Endothelial cell of umbilical vein (primary cell): ENCODE measurements at regions of chr6 and their contacts with region 1.

Region 1: GRCh38 chr6:50935442-50935841 is 116.8 kb downstream of the TFAP2B start:
- DNase-seq: no peak
- H3K4me3 ChIP-seq: no peak overlapping the region
- H3K27ac ChIP-seq: no peak overlapping the region
- H3K4me1 ChIP-seq: no peaks in the 10 kb centered on the region
- H3K27me3 ChIP-seq: no peaks in the 10 kb centered on the region
- CTCF ChIP-seq: no peak
- POLR2A ChIP-seq: no peak

Region 2: DNA sequence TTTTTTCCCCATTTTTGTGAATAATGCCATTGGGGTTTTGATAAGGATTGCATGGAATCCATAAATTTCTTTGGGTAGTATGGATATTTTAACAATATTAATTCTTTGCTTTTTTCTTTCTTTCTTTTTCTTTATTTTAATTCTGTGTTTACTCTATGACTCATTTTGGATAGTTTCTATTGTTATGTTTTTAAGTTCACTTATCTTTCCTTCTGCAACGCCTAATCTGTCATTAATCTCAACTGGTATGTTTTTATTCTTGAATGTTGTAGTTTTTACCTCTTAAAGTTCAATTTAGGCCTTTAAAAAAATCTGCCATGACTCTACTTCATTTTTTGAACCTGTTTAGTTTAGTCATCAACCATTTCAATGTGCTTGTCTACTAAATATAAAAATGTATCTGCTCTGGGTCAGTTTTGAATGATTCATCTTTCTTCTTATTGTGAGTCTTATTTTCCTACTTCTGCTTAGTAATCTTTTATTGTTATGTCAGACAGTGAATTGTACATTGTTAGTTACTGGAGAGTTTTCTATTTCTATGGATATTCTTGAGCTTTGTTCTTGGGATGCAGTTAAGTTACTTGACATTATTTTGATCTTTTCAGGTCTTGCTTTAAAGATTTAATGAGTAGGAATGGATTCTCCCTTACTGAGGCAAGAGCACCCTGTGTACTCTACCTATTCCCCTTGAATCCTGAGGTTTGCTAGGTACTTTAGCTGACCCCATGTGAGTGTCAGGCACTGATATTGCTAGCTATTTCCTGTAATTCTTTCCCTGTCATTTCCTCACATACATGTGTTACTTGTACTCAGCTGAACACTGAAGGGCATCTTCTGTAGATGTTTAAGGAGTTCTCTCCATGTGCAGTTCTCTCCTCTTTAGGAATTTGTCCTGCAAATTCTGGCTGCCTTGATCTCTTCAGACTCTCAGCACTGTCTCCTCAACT is 12.6 kb before region 1 on chr6:
- CTCF ChIA-PET with region 1: no interaction called
- POLR2A ChIA-PET with region 1: no interaction called
- dilution Hi-C with region 1: no loop called
- intact Hi-C with region 1: loop called (anchors 1 kb)
- DNase-seq: peak; percentile 38
- H3K4me3 ChIP-seq: no peak overlapping the region
- H3K27ac ChIP-seq: peak overlapping the region; percentile 86
- H3K4me1 ChIP-seq: peaks cover 7% of the 10 kb centered on the region
- H3K27me3 ChIP-seq: no peaks in the 10 kb centered on the region
- CTCF ChIP-seq: no peak
- POLR2A ChIP-seq: no peak

Region 3: GRCh38 chr6:51182827-51183226 is 247.4 kb after region 1 on chr6:
- CTCF ChIA-PET with region 1: no interaction called
- POLR2A ChIA-PET with region 1: no interaction called
- dilution Hi-C with region 1: no loop called
- intact Hi-C with region 1: no loop called
- DNase-seq: no peak
- H3K4me3 ChIP-seq: no peak overlapping the region
- H3K27ac ChIP-seq: no peak overlapping the region
- H3K4me1 ChIP-seq: no peaks in the 10 kb centered on the region
- H3K27me3 ChIP-seq: no peaks in the 10 kb centered on the region
- CTCF ChIP-seq: no peak
- POLR2A ChIP-seq: no peak